GM12878 (cell line): ENCODE measurements at regions of chr17 and their contacts with region 1.

Region 1: DNA sequence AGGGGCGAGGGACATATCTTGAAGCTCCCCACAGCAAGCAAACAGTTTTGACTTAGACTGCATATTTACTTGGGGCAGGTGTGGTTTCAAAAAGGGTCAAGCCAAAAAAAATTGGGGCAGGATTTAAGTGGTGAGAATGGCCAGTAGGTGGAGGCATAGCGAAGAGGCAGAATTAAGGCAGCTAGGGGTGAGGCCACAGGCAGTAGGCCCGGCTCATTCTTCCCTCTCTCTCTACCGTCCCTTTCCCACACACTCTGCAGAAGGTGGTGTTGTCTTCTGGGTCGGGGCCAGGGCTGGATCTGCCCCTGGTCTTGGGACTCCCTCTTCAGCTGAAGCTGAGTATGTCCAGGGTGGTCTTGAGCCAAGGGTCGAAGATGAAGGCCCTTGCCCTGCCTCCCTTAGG is 2.6 kb downstream of the SHBG start:
- DNase-seq: no peak
- ATAC-seq: peak; percentile 77
- H3K4me3 ChIP-seq: no peak overlapping the region
- H3K27ac ChIP-seq: no peak overlapping the region
- H3K4me1 ChIP-seq: no peaks in the 10 kb centered on the region
- H3K27me3 ChIP-seq: no peaks in the 10 kb centered on the region
- CTCF ChIP-seq: peak; percentile 59 to 73 (median 60); a peak in 5 of 6 replicates
- EP300 ChIP-seq: no peak
- POLR2A ChIP-seq: no peak
- RAD21 ChIP-seq: peak; percentile 55

Region 2: GRCh38 chr17:7673239-7673638 is 40.7 kb after region 1 on chr17:
- CTCF ChIA-PET with region 1: interaction called, 5 read pairs
- POLR2A ChIA-PET with region 1: no interaction called
- RAD21 ChIA-PET with region 1: no interaction called
- SMC1A ChIA-PET with region 1: no interaction called
- in situ Hi-C with region 1: no loop called
- intact Hi-C with region 1: loop called (anchors 5 kb)
- DNase-seq: peak; percentile 3
- ATAC-seq: no peak
- H3K4me3 ChIP-seq: no peak overlapping the region
- H3K27ac ChIP-seq: no peak overlapping the region
- H3K4me1 ChIP-seq: no peaks in the 10 kb centered on the region
- H3K27me3 ChIP-seq: no peaks in the 10 kb centered on the region
- CTCF ChIP-seq: peak; percentile 5 to 52 (median 38); a peak in 4 of 6 replicates
- EP300 ChIP-seq: no peak
- POLR2A ChIP-seq: no peak
- RAD21 ChIP-seq: 0 out of 2 replicates have a peak, but pooled peaks have one; percentile 22

Region 3: DNA sequence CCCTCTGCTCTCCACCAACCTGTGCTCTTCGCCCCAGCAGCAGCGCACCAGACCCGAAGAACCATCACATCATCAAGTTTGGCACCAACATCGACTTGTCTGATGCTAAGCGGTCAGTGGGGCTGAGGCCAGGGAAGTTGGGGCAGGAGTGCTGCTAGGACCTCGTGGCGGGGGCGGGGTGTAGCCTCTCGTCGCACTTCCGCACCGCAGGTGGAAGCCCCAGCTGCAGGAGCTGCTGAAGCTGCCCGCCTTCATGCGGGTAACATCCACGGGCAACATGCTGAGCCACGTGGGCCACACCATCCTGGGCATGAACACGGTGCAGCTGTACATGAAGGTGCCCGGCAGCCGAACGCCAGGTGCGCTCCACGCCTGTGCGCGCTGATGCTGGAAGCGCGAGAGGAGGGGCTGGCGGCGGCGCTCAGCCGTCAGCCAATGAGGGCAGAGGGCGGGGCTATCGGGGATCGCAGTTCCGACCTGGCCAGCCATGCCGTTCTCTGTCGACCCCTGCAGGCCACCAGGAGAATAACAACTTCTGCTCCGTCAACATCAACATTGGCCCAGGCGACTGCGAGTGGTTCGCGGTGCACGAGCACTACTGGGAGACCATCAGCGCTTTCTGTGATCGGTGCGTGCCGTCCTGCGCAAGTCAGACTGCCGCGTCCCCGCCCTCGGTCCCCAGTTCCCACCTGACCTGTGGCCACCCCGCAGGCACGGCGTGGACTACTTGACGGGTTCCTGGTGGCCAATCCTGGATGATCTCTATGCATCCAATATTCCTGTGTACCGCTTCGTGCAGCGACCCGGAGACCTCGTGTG is 219.2 kb after region 1 on chr17:
- CTCF ChIA-PET with region 1: no interaction called
- POLR2A ChIA-PET with region 1: no interaction called
- RAD21 ChIA-PET with region 1: no interaction called
- SMC1A ChIA-PET with region 1: no interaction called
- in situ Hi-C with region 1: no loop called
- intact Hi-C with region 1: no loop called
- DNase-seq: peak; percentile 73
- ATAC-seq: peak; percentile 90
- H3K4me3 ChIP-seq: peak overlapping the region; percentile 41; the same call in 1 of the 2 replicates
- H3K27ac ChIP-seq: no peak overlapping the region
- H3K4me1 ChIP-seq: peaks cover 26% of the 10 kb centered on the region
- H3K27me3 ChIP-seq: no peaks in the 10 kb centered on the region
- CTCF ChIP-seq: peak; percentile 95 to 100 (median 98); a peak in 5 of 6 replicates
- EP300 ChIP-seq: no peak
- POLR2A ChIP-seq: peak; percentile 71; the same call in 1 of the 2 replicates
- RAD21 ChIP-seq: peak; percentile 84